Caco-2 (cell line): ENCODE measurements at regions of chr1 and their contacts with region 1.

Region 1: DNA sequence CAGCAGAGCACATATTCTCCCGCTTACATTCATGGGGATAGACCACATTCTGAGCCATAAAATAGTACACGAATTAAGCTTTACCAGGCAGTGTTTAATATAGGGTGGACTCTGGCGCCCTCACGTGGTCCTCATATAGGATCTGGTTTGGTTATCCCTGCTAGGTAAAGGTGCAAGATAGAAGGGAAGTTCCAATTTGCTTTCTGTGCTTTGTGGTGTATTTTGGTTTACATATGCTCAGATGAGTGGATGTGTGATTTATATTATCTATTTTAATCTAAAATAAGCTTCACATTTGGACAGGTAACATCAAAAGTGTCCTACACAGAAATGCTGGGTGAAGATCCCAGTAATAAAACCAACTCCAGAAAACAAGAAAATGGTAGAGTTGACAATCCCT is 3.6 kb downstream of the CR1 start:
- DNase-seq: peak; percentile 56 to 57
- H3K4me3 ChIP-seq: no peak overlapping the region
- H3K4me3 Mint-ChIP-seq: no peak overlapping the region
- H3K27ac Mint-ChIP-seq: no peak overlapping the region
- H3K4me1 ChIP-seq: no peaks in the 10 kb centered on the region
- H3K4me1 Mint-ChIP-seq: no peaks in the 10 kb centered on the region
- H3K27me3 ChIP-seq: no peaks in the 10 kb centered on the region; the same call in 1 of the 2 replicates
- H3K27me3 Mint-ChIP-seq: peaks cover 26% of the 10 kb centered on the region
- CTCF ChIP-seq: peak; percentile 69 to 70

Region 2: DNA sequence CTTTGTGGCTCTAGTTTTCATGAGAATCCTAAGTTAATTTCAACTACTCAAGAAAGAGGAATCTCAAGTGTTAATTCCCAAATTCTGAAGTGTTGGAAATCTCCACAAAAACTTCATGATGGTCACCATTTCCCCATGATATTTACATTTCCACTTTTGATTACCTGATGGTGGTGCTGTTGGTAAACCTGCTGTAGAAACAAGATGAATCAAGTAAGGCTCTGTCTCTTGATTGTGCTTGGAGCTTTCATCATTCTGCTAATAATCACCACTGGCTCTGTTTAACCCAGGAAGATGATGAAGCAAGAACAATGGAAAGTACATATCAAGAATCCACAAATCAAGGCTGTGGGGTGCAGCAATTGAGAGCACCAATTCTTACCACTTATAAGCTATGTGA is 317.7 kb before region 1 on chr1:
- CTCF ChIA-PET with region 1: no interaction called
- POLR2A ChIA-PET with region 1: no interaction called
- intact Hi-C with region 1: loop called (anchors 5 kb)
- DNase-seq: peak in 1 of 2 experiments; percentile 8
- H3K4me3 ChIP-seq: no peak overlapping the region
- H3K4me3 Mint-ChIP-seq: no peak overlapping the region
- H3K27ac Mint-ChIP-seq: no peak overlapping the region
- H3K4me1 ChIP-seq: no peaks in the 10 kb centered on the region
- H3K4me1 Mint-ChIP-seq: peaks cover 5% of the 10 kb centered on the region
- H3K27me3 ChIP-seq: no peaks in the 10 kb centered on the region
- H3K27me3 Mint-ChIP-seq: no peaks in the 10 kb centered on the region
- CTCF ChIP-seq: peak in 1 of 2 experiments; percentile 38

Region 3: DNA sequence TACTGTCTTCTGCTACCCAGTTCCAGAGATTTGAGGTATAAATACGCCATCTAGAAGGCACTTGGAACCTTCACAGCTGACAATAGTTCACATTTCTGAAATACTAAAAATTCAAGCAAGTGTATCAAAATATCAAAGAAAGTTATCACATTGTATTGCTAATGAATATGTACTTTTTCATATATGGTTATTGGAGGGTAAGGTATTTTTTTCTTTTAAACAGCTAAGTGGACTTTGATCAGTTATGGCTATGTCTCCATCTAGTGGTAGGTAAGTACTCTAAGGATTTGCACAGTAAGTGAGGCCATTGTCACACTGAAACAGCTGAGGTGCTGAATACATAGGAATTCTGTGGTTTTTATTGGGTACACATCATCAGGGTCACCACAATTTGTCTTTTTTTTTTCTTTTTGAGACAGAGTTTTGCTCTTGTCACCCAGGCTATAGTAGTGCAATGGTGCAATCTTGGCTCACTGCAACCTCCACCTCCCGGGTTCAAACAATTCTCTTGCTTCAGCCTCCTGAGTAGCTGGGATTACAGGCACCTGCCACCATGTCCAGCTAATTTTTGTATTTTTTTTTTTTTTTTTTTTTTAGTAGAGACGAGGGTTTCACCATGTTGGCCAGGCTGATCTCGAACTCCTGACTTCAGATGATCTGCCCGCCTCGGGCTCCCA is 94.6 kb before region 1 on chr1:
- CTCF ChIA-PET with region 1: interaction called, 5 read pairs
- POLR2A ChIA-PET with region 1: no interaction called
- intact Hi-C with region 1: loop called (anchors 5 kb)
- DNase-seq: peak in 1 of 2 experiments; percentile 35
- H3K4me3 ChIP-seq: no peak overlapping the region
- H3K4me3 Mint-ChIP-seq: no peak overlapping the region
- H3K27ac Mint-ChIP-seq: no peak overlapping the region
- H3K4me1 ChIP-seq: 0 out of 2 replicates have a peak, but pooled peaks cover 4% of the 10 kb centered on the region
- H3K4me1 Mint-ChIP-seq: no peaks in the 10 kb centered on the region
- H3K27me3 ChIP-seq: no peaks in the 10 kb centered on the region
- H3K27me3 Mint-ChIP-seq: no peaks in the 10 kb centered on the region
- CTCF ChIP-seq: peak; percentile 58 to 76

Region 4: GRCh38 chr1:207423560-207424292 is 75.8 kb before region 1 on chr1:
- CTCF ChIA-PET with region 1: no interaction called
- POLR2A ChIA-PET with region 1: no interaction called
- intact Hi-C with region 1: loop called (anchors 5 kb)
- DNase-seq: peak in 1 of 2 experiments; percentile 10
- H3K4me3 ChIP-seq: peak overlapping the region; percentile 23
- H3K4me3 Mint-ChIP-seq: peak overlapping the region; percentile 52
- H3K27ac Mint-ChIP-seq: no peak overlapping the region
- H3K4me1 ChIP-seq: peaks cover 5% of the 10 kb centered on the region; the same call in 1 of the 2 replicates
- H3K4me1 Mint-ChIP-seq: no peaks in the 10 kb centered on the region
- H3K27me3 ChIP-seq: no peaks in the 10 kb centered on the region; the same call in 1 of the 2 replicates
- H3K27me3 Mint-ChIP-seq: peaks cover 14% of the 10 kb centered on the region
- CTCF ChIP-seq: peak in 1 of 2 experiments; percentile 11

Region 5: GRCh38 chr1:207454046-207454964 is 45.3 kb before region 1 on chr1 and contains the start of gene CR2:
- CTCF ChIA-PET with region 1: interaction called, 3 read pairs
- POLR2A ChIA-PET with region 1: no interaction called
- intact Hi-C with region 1: loop called (anchors 2 kb)
- DNase-seq: peak; percentile 72 to 77
- H3K4me3 ChIP-seq: peak within 1 kb of the TSS; percentile 43
- H3K4me3 Mint-ChIP-seq: peak within 1 kb of the TSS; percentile 63
- H3K27ac Mint-ChIP-seq: no peak within 1 kb of the TSS
- H3K4me1 ChIP-seq: no peaks in the 10 kb centered on the region; the same call in 1 of the 2 replicates
- H3K4me1 Mint-ChIP-seq: no peaks in the 10 kb centered on the region
- H3K27me3 ChIP-seq: no peaks in the 10 kb centered on the region; the same call in 1 of the 2 replicates
- H3K27me3 Mint-ChIP-seq: peaks cover 21% of the 10 kb centered on the region
- CTCF ChIP-seq: peak; percentile 19 to 57
- total RNA-seq, gene CR2: 0.21 and 0.34 TPM in 2 replicates